AG04449 (cell line): ENCODE measurements at regions of chr5 and their contacts with region 1.

Region 1: DNA sequence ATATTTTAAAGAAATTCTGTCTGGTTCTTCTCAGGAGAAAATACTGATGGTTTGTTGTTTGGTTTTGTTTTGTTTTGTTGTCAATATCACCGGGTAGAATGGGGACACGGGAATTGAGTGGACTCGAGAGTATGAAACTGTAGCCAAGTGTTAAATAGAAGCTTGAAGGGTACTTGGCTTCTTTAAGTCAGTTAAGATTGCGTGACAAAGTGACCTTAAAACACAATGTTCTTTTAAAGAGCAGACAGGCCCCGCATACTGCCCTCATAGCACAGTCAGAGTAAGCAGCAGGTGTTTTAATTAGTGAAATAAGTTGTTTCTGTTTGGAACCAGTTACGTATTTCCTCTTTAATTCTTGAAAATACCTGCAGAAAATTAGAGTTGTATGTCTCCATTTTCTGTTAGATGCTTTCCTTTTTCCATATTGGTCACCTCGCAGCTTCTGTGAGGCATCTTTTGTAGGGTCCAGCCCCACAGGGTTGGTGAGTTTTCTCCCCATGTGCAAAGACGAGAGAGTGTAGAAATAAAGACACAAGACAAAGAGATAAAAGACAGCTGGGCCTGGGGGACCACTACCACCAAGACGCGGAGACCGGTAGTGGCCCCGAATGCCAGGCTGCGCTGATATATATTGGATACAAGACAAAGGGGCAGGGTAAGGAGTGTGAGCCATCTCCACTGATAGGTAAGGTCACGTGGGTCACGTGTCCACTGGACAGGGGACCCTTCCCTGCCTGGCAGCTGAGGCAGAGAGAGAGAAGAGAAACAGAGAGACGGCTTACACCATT is 9.6 kb downstream of the TRIP13 start:
- DNase-seq: no peak
- H3K4me3 ChIP-seq: no peak overlapping the region
- CTCF ChIP-seq: no peak

Region 2: DNA sequence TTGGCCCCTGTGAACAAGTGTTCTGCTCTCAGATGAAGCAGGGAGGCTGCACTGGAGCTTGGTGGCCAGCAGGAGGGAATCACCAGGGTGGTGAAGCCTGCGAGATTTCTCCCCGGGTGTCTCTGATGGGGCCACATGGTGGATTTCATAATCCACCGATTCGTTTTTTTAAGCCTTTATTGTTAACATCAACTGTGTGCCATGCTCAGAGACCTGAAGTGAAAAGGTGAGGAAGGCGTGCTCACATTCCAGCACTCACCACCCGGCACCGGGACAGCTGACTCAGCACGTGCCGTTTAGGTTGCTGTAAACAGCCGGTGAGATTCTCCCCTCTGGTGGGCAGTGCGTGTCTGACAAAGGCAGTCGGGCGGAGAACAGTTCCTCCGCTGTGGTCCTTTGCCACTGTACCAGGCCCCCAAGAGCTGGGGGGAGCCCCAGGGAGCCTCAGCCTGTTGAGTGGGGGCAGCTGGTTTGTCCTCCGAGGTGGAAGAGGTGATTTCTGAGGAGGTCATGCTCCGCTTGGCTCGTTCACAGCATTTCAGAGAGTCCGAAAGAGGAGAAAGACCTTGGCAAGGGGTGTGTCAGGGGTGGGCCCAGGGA is 593.6 kb before region 1 on chr5:
- CTCF ChIA-PET with region 1: no interaction called
- POLR2A ChIA-PET with region 1: no interaction called
- DNase-seq: no peak
- H3K4me3 ChIP-seq: no peak overlapping the region
- CTCF ChIP-seq: peak; percentile 51

Region 3: DNA sequence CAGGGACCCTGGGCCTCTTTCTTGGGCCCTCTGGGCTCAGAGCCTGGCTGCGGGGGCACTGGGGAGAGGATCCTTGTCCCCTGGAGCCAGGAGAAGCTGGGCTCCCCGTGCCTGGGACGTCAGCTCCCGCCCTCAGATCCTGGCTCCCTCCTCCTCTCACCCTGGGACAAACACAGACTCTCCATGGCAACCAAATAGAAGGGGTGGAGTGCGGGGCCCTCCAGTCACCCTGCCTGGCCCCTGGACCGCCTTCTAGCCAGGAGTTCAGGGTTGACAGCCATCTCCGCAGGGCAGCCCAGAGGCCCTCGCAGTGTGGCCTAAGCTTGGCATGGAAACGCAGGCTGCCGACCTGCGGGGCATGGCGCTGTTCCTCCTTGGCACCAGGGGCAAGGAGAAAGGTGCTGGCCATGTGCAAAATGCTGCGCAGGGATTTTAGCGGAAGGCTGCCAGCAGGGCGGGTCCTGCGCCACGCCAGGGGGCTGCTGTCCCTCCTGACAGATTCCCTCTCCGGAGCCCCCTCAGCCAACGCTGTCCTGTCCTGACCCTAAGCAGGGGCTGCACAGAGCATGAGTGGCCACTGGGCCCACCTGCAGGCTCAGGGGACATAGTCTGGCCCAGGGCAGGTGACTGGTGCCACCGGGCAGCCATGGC is 52.5 kb before region 1 on chr5:
- CTCF ChIA-PET with region 1: no interaction called
- POLR2A ChIA-PET with region 1: no interaction called
- DNase-seq: no peak
- H3K4me3 ChIP-seq: no peak overlapping the region
- CTCF ChIP-seq: no peak

Region 4: GRCh38 chr5:912280-913091 is 10.2 kb after region 1 on chr5:
- CTCF ChIA-PET with region 1: interaction called, 29 read pairs
- POLR2A ChIA-PET with region 1: no interaction called
- DNase-seq: peak; percentile 56
- H3K4me3 ChIP-seq: no peak overlapping the region
- CTCF ChIP-seq: no peak